ENCODE measurements at regions of chr11 and their contacts with region 1.

Region 1: DNA sequence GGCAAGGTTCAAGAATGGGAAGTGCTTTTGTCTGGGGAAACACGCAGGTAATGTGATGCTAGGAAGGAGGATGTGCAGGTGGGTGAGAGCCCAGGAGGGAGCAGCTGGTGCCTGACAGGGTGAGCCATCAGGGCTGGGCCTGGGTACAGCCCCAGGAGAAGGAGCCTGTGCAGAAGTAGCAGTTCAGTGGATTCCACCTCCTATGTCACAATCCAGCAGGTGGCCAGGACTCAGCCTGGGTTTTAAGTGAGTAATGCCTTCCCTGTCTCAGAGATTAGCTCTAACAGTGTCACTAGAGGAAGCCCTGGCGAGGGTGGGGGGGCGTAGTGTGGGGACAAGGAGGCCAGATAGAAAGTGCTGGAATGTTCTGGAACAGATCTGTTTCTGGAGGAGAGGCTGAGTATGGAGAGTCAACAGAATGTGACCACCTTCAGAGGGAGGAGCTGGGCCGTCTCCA is 8.1 kb downstream of the RIC8A start:
- DNase-seq: no peak
- H3K4me3 ChIP-seq: no peak overlapping the region
- H3K27ac ChIP-seq: no peak overlapping the region
- H3K4me1 ChIP-seq: no peaks in the 10 kb centered on the region
- H3K27me3 ChIP-seq: no peaks in the 10 kb centered on the region
- CTCF ChIP-seq: no peak
- EP300 ChIP-seq: no peak
- POLR2A ChIP-seq: no peak
- RAD21 ChIP-seq: no peak

Region 2: GRCh38 chr11:236774-237767 is 21.5 kb after region 1 on chr11 and contains the start of gene PSMD13:
- CTCF ChIA-PET with region 1: interaction called, 3 read pairs
- POLR2A ChIA-PET with region 1: interaction called, 99 read pairs
- DNase-seq: peak in 1 of 2 experiments; percentile 87
- H3K4me3 ChIP-seq: peak within 1 kb of the TSS; percentile 96 to 98 (median 96)
- H3K27ac ChIP-seq: peak within 1 kb of the TSS; percentile 71; the same call in 1 of the 2 replicates
- H3K4me1 ChIP-seq: no peaks in the 10 kb centered on the region; a peak in 1 of 7 replicates
- H3K27me3 ChIP-seq: no peaks in the 10 kb centered on the region
- CTCF ChIP-seq: no peak
- EP300 ChIP-seq: no peak
- POLR2A ChIP-seq: peak in 1 of 2 experiments; percentile 18; a peak in 1 of 3 replicates
- RAD21 ChIP-seq: no peak
- total RNA-seq, gene PSMD13: 136 and 141 TPM in 2 replicates

Measured in H1 (cell line).